Heart left ventricle (tissue), 16 donors: ENCODE measurements at regions of chr3 and their contacts with region 1.

Region 1: DNA sequence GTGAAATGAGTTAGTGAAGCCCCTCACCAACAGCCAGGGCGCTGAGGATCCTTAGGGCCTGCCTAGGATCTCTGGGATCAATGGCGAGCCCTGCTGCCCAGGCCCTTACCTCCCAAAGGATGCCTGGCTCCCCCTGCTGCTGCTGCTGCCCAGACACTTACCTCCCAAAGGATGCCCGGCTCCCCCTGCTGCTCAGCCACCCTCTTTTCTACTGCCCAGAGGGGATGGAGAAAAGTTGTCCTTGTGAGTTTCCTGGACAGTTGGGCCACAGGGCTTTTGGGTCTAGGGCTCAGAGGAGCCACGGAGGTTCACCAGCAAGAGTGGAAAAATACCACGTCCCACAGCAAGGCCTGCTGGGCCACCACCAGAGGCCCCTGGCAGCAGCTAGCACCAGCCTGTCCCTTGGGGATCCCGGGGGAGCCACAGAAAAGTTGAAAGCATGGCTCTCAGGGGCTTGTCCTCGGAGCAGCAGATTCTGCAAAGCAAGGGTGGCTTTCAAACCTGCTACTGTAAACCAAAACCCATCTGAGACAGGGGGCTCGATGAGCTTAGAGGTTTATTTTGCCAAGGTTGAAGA is 59.4 kb downstream of the SLC6A6 start:
- DNase-seq: peak; percentile 48 to 74 (median 60)
- ATAC-seq: peak in 3 of 4 donors; percentile 44 to 48 (median 45)
- H3K4me3 ChIP-seq: no peak overlapping the region
- H3K27ac ChIP-seq: peak overlapping the region in 3 of 12 donors; percentile 5 to 16 (median 14)
- H3K4me1 ChIP-seq: peaks cover 0 to 51% (median 19%) of the 10 kb centered on the region in 12 donors
- H3K27me3 ChIP-seq: peaks cover 0 to 8% (median 0%) of the 10 kb centered on the region in 9 donors
- CTCF ChIP-seq: peak; percentile 22 to 65 (median 50)
- POLR2A ChIP-seq: no peak

Region 2: DNA sequence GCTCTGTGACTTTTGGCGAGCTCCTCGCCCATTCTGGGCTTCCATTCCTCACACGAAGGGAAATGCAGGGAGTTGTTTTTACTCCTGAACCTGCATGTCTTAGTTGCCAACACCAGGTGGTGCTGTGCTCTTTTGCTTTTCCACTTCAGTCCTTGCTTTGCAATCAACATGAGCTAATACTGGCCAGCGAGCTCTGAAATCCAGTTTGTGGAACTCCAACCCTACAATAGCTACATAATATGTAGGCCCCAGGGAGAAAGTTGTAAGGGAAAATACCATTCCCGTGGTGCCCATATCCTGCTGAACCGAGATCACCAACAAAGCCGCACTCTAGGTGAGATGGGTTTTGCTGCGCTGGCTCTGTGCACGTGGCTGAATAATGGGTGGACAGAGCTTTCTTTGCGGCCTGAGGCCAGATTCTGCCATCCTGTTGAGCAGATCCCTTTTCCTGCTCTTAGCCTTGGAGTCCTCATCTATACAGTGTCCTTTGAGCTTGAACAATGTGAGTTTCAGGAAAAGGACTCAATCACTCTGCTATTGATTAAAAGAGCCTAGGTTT is 258.2 kb before region 1 on chr3:
- intact Hi-C with region 1: loop called in 3 of 10 experiments (anchors 2 kb)
- DNase-seq: peak in 4 of 5 donors; percentile 58 to 72 (median 64)
- ATAC-seq: peak; percentile 62 to 78 (median 71)
- H3K4me3 ChIP-seq: no peak overlapping the region
- H3K27ac ChIP-seq: peak overlapping the region in 7 of 12 donors; percentile 9 to 88 (median 80)
- H3K4me1 ChIP-seq: peaks cover 0 to 39% (median 25%) of the 10 kb centered on the region in 12 donors
- H3K27me3 ChIP-seq: no peaks in the 10 kb centered on the region
- CTCF ChIP-seq: peak; percentile 74 to 90 (median 85)
- POLR2A ChIP-seq: no peak

Region 3: DNA sequence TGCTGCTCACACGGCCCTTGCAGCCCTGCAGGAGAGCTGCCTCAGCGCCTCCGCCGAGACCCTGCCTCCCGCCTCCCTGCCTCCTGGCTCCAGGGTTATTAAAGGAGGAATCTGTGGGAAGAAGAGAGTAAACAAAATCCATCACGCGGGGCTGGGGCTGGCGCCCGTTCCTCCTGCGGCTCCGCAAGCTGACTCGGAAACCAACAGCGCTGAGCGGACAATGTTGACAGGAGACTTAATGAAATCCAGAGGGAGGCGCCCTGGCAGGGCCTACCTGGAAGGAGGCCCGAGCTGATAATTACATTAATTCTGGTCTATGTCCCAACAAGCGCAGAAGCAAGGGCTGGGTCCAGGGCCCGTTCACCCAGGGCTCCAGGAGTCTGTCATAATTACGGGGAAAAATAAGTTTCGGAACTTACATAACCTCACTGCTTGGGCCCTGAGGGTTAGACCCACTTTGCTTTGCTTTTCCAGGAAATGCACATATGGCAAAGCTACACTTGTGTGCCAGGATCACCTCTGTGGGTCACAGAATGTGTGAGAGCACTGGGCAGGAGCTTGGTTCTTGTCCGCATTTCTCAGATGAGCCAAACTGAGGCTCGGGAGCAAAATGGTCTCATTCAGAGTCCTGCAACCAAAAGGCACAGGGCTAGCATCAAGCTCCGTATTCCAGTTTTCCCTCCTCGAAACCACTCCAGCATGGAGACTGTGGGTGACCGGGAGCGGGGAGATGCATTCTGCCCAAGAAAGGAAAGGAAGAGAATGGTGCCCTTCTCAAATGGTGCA is 103.2 kb before region 1 on chr3:
- intact Hi-C with region 1: loop called in 1 of 10 experiments (anchors 5 kb)
- DNase-seq: peak; percentile 52 to 82 (median 64)
- ATAC-seq: peak; percentile 70 to 85 (median 80)
- H3K4me3 ChIP-seq: peak overlapping the region in 1 of 12 donors; percentile 5
- H3K27ac ChIP-seq: peak overlapping the region in 6 of 12 donors; percentile 14 to 62 (median 46)
- H3K4me1 ChIP-seq: peaks cover 0 to 8% (median 3%) of the 10 kb centered on the region in 12 donors
- H3K27me3 ChIP-seq: peaks cover 0 to 18% (median 0%) of the 10 kb centered on the region in 9 donors
- CTCF ChIP-seq: no peak
- POLR2A ChIP-seq: no peak

Region 4: DNA sequence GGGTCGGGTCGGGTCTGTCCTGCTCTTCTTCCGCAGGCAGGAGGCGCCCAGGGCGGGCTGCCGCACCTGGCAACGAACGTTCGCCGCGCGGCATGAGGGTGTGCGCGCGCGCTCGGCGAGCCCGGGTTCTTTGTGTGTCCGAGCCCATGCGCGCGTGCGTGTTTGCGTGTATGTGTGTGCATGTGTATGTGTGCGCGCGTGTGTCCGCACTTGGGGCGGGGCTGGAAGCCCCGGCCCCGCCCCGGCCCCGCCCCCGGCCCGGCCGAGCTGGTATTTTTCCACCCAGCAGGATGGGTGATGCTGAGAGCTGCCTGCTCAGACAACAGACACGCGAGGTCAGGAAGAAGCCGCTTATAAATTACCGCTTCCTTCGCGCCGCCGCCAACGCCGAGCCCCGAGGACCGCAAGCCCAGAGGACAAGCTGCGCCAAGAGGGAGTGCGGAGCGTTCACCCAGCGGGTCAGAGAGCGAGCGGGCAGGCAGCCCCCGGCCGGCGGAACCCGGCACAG is 59.5 kb before region 1 on chr3 and contains the start of gene SLC6A6:
- intact Hi-C with region 1: loop called in 6 of 10 experiments (anchors 2 to 10 kb)
- DNase-seq: peak; percentile 89 to 97 (median 94)
- ATAC-seq: peak; percentile 70 to 84 (median 79)
- H3K4me3 ChIP-seq: peak within 1 kb of the TSS; percentile 62 to 92 (median 81)
- H3K27ac ChIP-seq: peak within 1 kb of the TSS; percentile 43 to 96 (median 86)
- H3K4me1 ChIP-seq: peaks cover 0 to 51% (median 29%) of the 10 kb centered on the region in 12 donors
- H3K27me3 ChIP-seq: peaks cover 0 to 5% (median 0%) of the 10 kb centered on the region in 9 donors
- CTCF ChIP-seq: peak in 8 of 12 donors; percentile 4 to 58 (median 43)
- POLR2A ChIP-seq: peak in 1 of 2 donors; percentile 83
- total RNA-seq, gene SLC6A6: 17.5 to 101 (median 34.9) TPM

Region 5: DNA sequence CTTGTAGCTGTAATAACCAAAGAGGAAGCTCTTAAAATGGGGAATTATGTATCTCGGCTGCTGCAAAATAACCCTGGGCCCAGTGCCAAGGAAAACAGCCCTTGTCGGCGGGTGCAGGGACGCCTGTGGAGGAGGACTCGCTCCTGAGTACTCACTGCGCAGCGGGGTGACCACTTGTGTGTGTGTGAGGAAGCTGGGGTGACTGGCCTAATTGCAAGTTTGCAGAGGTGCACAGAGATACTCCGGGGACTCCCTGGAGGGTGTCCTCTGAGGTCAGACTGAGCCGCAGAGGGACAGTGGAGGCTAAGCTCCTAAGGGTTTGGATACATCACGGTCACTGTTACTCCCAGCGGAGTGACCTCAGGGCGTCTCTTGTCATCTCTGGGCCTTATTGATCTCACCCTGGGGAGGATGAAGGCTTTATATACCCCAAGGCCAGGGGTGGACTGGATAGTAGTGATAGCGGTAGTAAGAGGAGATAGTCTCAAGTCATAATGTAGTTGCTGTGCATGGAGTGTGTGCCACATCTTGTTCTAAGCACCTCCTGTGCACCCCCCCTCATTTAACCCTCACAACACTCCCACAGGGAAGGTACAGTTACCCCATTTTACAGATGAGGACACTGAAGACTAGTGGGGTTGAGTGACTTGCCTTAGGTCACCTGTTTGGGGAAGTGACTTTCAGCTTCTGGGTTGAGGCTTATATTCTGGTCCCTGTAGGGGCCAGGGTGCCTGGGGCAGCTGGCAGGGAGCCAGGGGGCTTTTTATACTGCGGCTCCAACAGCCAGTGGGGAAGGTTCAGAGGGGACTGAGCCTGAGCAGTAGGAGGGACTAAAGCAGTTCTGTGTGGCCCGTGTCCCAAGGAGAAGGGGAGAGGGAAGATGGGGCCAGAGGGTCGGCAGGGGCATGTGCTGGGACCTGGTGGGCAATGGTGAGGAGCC is 22.0 kb before region 1 on chr3:
- intact Hi-C with region 1: loop called in 1 of 10 experiments (anchors 2 kb)
- DNase-seq: peak; percentile 84 to 89 (median 88)
- ATAC-seq: peak; percentile 25 to 45 (median 42)
- H3K4me3 ChIP-seq: peak overlapping the region in 1 of 12 donors; percentile 9
- H3K27ac ChIP-seq: peak overlapping the region in 6 of 12 donors; percentile 6 to 80 (median 38)
- H3K4me1 ChIP-seq: peaks cover 3 to 78% (median 60%) of the 10 kb centered on the region in 12 donors
- H3K27me3 ChIP-seq: peaks cover 0 to 10% (median 0%) of the 10 kb centered on the region in 9 donors
- CTCF ChIP-seq: no peak
- POLR2A ChIP-seq: no peak